Gastrocnemius medialis (tissue), 4 donors: ENCODE measurements at regions of chr9 and their contacts with region 1.

Region 1: DNA sequence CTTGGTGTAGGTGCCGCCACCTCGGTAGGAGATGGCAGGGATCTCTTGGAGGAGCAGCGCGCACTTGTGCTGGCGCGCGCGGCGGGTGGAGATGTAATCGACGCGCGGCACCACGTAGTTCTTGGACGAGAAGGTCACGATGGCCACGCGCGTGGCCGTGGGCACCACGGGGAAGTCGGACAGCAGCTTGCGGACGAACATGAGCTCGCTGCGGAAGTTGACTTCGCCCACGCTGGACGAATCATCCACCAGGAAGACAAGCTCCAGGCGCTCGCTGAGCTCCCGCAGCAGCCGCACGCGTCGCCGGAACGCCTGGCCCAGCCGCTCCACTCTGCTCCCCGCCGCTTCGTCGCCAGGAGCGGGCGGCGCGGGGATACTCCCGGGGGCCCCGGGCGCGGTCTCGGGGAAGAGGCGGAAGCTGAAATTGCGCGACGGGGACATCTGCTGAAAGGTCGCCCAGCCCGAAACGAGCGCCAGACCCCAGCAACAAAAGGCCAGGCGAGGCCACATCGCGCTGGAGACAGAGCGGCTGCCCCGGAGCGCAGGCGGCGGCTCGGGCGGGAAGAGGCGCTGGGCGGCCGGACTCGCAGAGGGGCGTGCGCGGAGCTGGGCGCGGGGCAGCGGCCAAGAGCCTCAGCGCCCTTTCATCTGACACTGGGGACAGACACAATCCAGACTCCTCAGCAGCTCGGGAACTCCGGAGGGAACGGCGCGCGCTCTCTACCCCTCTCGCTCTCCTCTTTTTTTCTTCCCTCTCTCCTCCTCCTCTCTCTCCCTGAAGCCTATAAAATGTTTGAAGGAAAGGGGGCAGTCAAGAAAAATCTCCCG is at the start of gene SVEP1:
- DNase-seq: peak in 1 of 2 donors; percentile 27
- ATAC-seq: peak; percentile 36 to 37
- H3K4me3 ChIP-seq: peak within 1 kb of the TSS; percentile 41 to 52 (median 51)
- H3K27ac ChIP-seq: peak within 1 kb of the TSS; percentile 67 to 76 (median 71)
- H3K4me1 ChIP-seq: no peaks in the 10 kb centered on the region
- H3K27me3 ChIP-seq: peaks cover 12 to 29% (median 23%) of the 10 kb centered on the region in 3 donors
- CTCF ChIP-seq: no peak
- POLR2A ChIP-seq: peak; percentile 12 to 28
- total RNA-seq, gene SVEP1: 3.8 to 10.3 (median 6.5) TPM

Region 2: GRCh38 chr9:110427497-110428104 is 151.6 kb before region 1 on chr9:
- in situ Hi-C with region 1: loop called in 1 of 4 experiments (anchors 25 kb)
- intact Hi-C with region 1: no loop called
- DNase-seq: no peak
- ATAC-seq: no peak
- H3K4me3 ChIP-seq: no peak overlapping the region
- H3K27ac ChIP-seq: no peak overlapping the region
- H3K4me1 ChIP-seq: no peaks in the 10 kb centered on the region
- H3K27me3 ChIP-seq: no peaks in the 10 kb centered on the region
- CTCF ChIP-seq: no peak
- POLR2A ChIP-seq: no peak

Region 3: DNA sequence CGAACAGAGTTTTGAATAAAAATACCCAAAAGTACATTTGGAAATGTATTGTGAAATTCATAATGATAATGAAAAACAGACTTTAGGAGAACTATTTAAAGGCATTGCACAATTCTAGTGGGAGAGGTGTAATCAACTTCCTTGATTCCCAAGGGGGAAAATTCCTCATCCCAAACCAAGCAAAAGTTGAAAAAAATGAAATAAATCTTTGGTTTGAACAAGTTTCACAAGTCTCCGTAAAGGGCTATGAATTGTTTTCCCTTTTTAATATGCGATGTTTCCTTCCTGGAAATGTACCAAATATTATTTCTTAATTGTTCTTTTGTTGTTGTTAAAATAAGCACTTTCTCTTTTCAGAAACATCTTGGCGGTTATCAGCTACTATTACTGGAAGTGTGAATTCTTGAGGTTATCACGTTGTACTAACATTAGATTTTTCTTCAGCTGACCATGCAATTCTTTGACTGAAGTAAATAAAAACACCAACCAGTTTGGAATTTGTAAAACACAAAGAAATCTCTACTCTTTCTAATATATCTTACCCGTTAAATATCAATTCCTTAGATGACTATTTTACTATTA is 59.0 kb before region 1 on chr9:
- in situ Hi-C with region 1: no loop called
- intact Hi-C with region 1: loop called (anchors 5 kb)
- DNase-seq: no peak
- ATAC-seq: peak; percentile 62 to 70
- H3K4me3 ChIP-seq: no peak overlapping the region
- H3K27ac ChIP-seq: peak overlapping the region in 3 of 4 donors; percentile 4 to 31 (median 19)
- H3K4me1 ChIP-seq: peaks cover 0 to 4% of the 10 kb centered on the region in 2 donors
- H3K27me3 ChIP-seq: no peaks in the 10 kb centered on the region
- CTCF ChIP-seq: no peak
- POLR2A ChIP-seq: no peak